Activated CD8-positive, alpha-beta T cell treated with anti-CD3 and anti-CD28 coated beads for 36 hours (primary cell): ENCODE measurements at regions of chr14 and their contacts with region 1.

Region 1: GRCh38 chr14:23539248-23540140 is 12.1 kb downstream of the ZFHX2 start:
- DNase-seq: peak; percentile 31
- ATAC-seq: peak; percentile 92
- H3K4me3 Mint-ChIP-seq: no peak overlapping the region
- H3K27ac Mint-ChIP-seq: no peak overlapping the region
- H3K4me1 Mint-ChIP-seq: no peaks in the 10 kb centered on the region
- H3K27me3 Mint-ChIP-seq: no peaks in the 10 kb centered on the region
- CTCF ChIP-seq: peak; percentile 79

Region 2: GRCh38 chr14:23478111-23478759 is 61.3 kb before region 1 on chr14:
- CTCF ChIA-PET with region 1: interaction called, 20 read pairs
- POLR2A ChIA-PET with region 1: interaction called, 4 read pairs
- intact Hi-C with region 1: no loop called
- DNase-seq: peak; percentile 81
- ATAC-seq: peak; percentile 76
- H3K4me3 Mint-ChIP-seq: no peak overlapping the region
- H3K27ac Mint-ChIP-seq: no peak overlapping the region
- H3K4me1 Mint-ChIP-seq: peaks cover 4% of the 10 kb centered on the region
- H3K27me3 Mint-ChIP-seq: no peaks in the 10 kb centered on the region
- CTCF ChIP-seq: peak; percentile 71

Region 3: DNA sequence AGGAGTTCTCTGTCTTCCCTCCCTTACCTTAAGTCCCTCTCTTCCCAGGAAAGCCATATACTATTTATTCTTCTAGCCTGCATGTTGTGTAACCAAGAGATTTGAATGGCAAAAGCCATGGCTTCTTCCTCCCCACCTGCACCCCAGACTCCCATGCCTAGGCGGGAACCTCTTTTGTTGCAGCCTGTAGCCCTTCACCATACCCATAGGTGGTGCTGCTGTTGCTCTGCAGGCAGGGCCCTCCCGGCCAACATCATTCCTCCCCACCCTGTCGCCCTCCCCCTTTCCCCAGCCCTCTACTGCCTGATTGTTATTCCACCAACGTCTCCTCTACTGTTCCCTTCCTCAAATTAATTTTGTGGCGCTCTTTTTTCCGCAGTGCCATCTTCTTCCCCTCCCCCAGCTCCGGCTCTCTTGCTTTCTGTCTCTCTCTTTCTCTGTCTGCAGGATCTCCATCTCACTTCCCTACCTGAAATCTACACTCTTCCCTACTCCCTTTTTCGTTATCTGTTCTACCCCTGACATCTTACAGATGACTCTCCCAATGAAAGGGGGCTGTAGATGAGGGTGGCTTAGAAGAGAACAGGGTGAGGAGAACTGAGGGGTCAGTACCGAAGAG is 56.1 kb before region 1 on chr14:
- CTCF ChIA-PET with region 1: interaction called, 20 read pairs
- POLR2A ChIA-PET with region 1: interaction called, 4 read pairs
- intact Hi-C with region 1: no loop called
- DNase-seq: peak; percentile 23
- ATAC-seq: peak; percentile 81
- H3K4me3 Mint-ChIP-seq: no peak overlapping the region
- H3K27ac Mint-ChIP-seq: no peak overlapping the region
- H3K4me1 Mint-ChIP-seq: no peaks in the 10 kb centered on the region
- H3K27me3 Mint-ChIP-seq: no peaks in the 10 kb centered on the region
- CTCF ChIP-seq: peak; percentile 44

Region 4: DNA sequence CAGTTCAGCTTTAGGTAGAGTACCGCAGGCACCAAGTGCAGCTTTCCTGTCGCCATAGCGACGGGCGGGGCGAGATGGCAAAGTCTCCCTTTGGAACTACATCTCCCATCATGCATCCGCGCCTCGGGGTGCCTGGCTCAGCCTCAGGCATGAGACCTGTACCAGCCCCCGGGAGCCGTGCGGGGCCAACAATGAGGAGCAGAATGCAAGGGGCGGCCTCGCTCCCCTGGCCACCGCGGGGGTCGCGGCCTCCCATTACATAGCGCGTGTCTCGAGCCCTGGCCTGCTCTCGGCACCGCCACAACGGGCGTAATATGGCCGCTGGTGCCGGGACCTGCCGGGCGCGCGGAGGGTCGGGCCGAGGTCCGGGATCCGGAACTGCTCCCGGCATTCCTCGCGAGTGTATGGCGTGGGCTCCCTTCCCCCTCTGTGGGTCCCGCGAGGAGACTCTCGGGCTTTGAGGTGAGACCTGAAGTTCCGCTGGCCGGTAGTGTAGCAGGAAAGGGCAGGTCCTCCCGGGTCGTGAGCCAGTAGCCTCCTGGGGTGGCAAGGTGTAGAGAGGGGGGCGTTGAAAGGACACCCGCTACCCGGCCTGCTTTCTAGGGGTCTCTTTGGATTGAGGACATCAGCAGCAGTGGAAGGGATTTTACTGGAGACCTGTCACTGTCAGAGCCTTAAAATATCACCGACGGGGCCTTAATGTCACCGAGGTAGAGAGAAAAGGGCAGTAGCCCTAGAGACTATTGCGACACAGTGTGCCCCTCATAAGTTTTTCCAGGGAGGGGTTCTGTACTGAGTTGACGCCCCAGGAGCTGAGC is 16.6 kb after region 1 on chr14 and contains the start of gene THTPA:
- CTCF ChIA-PET with region 1: interaction called, 78 read pairs
- POLR2A ChIA-PET with region 1: no interaction called
- intact Hi-C with region 1: no loop called
- DNase-seq: peak; percentile 98
- ATAC-seq: peak; percentile 80
- H3K4me3 Mint-ChIP-seq: peak within 1 kb of the TSS; percentile 94
- H3K27ac Mint-ChIP-seq: peak within 1 kb of the TSS; percentile 96
- H3K4me1 Mint-ChIP-seq: peaks cover 38% of the 10 kb centered on the region
- H3K27me3 Mint-ChIP-seq: no peaks in the 10 kb centered on the region
- CTCF ChIP-seq: no peak
- total RNA-seq, gene THTPA: 5.1 to 7.6 TPM

Region 5: DNA sequence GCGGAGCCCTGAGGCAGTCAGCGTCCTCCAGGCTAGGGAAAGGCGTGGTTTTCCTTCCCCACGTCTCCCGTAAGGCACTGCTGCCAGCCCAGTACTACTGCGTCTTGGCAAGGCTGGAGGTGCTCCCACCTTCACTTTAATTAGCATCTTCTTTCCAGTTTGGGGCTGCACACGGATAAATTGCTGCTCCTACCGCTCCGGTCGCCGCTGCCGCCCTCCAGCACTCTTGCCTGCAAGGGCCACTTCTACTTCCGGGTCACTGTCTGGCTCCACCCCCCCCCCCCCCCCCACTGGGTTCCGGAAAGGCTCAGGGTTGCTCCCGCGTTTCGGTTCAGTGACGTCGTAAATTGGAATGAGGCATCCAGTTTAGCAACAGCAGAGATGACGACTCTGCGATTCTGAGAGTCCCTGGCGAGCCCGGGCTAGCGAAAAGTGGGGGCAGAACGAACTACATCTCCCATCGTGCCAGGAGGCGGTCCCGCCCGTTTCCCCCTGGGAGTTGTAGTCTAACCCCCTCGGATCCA is 692.7 kb after region 1 on chr14 and contains the start of gene NEDD8:
- CTCF ChIA-PET with region 1: no interaction called
- POLR2A ChIA-PET with region 1: no interaction called
- intact Hi-C with region 1: no loop called
- DNase-seq: peak; percentile 94
- ATAC-seq: peak; percentile 90
- H3K4me3 Mint-ChIP-seq: peak within 1 kb of the TSS; percentile 93
- H3K27ac Mint-ChIP-seq: peak within 1 kb of the TSS; percentile 96
- H3K4me1 Mint-ChIP-seq: peaks cover 40% of the 10 kb centered on the region
- H3K27me3 Mint-ChIP-seq: no peaks in the 10 kb centered on the region
- CTCF ChIP-seq: no peak
- total RNA-seq, gene NEDD8: 167 to 172 TPM